Adrenal gland (tissue), 19 donors: ENCODE measurements at regions of chr1 and their contacts with region 1.

Region 1: DNA sequence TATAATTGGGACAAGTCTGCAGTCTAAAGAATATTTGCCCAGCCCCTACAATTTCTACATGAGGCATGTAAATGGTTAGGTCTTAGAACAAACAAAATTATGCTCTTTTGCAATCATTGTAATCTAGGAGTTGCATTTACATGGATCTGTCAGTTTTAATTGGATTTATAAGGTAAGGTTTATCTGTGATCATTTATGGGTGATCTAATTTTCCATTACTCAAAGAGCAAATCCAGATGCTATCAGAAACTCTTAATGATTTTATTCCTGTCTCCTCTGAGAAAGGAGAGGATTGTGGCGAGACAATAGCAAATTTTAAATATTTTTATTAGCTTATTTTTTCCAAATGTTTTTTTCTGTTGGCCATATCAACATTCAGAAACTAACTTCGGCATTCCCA is 14.1 kb upstream of the NEGR1 start:
- DNase-seq: no peak
- H3K4me3 ChIP-seq: no peak overlapping the region
- H3K27ac ChIP-seq: no peak overlapping the region
- H3K4me1 ChIP-seq: no peaks in the 10 kb centered on the region
- H3K27me3 ChIP-seq: no peaks in the 10 kb centered on the region
- CTCF ChIP-seq: no peak
- POLR2A ChIP-seq: no peak

Region 2: GRCh38 chr1:72341661-72342060 is 45.2 kb after region 1 on chr1:
- intact Hi-C with region 1: loop called (anchors 5 kb)
- DNase-seq: no peak
- H3K4me3 ChIP-seq: no peak overlapping the region
- H3K27ac ChIP-seq: no peak overlapping the region
- H3K4me1 ChIP-seq: no peaks in the 10 kb centered on the region
- H3K27me3 ChIP-seq: no peaks in the 10 kb centered on the region
- CTCF ChIP-seq: no peak
- POLR2A ChIP-seq: no peak